H1 (cell line): ENCODE measurements at regions of chr5 and their contacts with region 1.

Region 1: GRCh38 chr5:148957591-148958202 is 105.2 kb downstream of the SH3TC2 start:
- DNase-seq: peak in 1 of 2 experiments; percentile 85
- H3K4me3 ChIP-seq: no peak overlapping the region
- H3K27ac ChIP-seq: no peak overlapping the region
- H3K4me1 ChIP-seq: peaks cover 3 to 6% (median 5%) of the 10 kb centered on the region in 4 experiments; a peak in 6 of 7 replicates
- H3K27me3 ChIP-seq: no peaks in the 10 kb centered on the region
- CTCF ChIP-seq: peak; percentile 73 to 87 (median 86)
- EP300 ChIP-seq: no peak
- POLR2A ChIP-seq: no peak
- RAD21 ChIP-seq: peak; percentile 91 to 96

Region 2: GRCh38 chr5:148831590-148832565 is 125.8 kb before region 1 on chr5:
- CTCF ChIA-PET with region 1: interaction called, 10 read pairs
- POLR2A ChIA-PET with region 1: no interaction called
- DNase-seq: no peak
- H3K4me3 ChIP-seq: no peak overlapping the region
- H3K27ac ChIP-seq: no peak overlapping the region
- H3K4me1 ChIP-seq: no peaks in the 10 kb centered on the region; a peak in 1 of 7 replicates
- H3K27me3 ChIP-seq: peaks cover 5 to 10% (median 9%) of the 10 kb centered on the region in 4 experiments
- CTCF ChIP-seq: no peak
- EP300 ChIP-seq: no peak
- POLR2A ChIP-seq: no peak
- RAD21 ChIP-seq: no peak

Region 3: DNA sequence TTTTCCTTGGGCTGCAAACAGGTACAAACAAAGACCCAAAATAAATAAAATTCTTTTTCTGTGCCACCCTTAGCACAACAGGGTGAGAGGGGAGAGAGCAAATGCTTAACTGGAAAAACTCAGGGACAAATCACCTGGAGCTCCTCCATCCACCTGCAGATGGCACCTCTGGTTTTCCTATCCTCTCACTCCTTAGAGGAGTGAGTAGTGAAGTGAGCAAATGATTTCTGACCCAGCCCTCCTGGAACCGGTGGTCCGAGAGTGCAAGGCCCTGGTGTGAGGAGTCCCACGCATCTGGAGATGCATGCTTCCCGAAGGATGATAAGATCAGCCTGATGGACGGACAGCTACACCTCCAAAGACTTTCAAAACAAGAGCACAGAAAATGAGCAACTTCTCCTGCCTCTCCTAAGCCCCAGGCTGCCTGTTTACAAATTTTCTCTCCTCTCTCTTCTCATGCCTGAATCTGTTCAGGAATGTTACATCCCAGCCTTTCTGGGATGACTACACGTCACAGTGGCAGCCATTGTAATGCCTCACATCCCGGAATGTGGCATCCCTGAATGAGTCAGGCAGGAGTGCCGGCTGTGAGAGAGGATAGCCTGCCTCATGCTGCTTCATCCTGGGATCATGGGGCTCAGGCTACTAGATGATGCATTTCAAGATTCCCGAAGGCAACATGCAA is 44.8 kb before region 1 on chr5:
- CTCF ChIA-PET with region 1: interaction called, 114 read pairs
- POLR2A ChIA-PET with region 1: interaction called, 3 read pairs
- DNase-seq: peak; percentile 53 to 68
- H3K4me3 ChIP-seq: no peak overlapping the region
- H3K27ac ChIP-seq: no peak overlapping the region; the same call in none of the 2 replicates
- H3K4me1 ChIP-seq: peaks cover 4 to 17% (median 9%) of the 10 kb centered on the region in 4 experiments
- H3K27me3 ChIP-seq: no peaks in the 10 kb centered on the region
- CTCF ChIP-seq: peak; percentile 29 to 56 (median 52)
- EP300 ChIP-seq: peak in 1 of 2 experiments; percentile 82; a peak in 1 of 3 replicates
- POLR2A ChIP-seq: no peak
- RAD21 ChIP-seq: peak; percentile 65 to 72

Region 4: GRCh38 chr5:148979104-148979723 is 21.5 kb after region 1 on chr5:
- CTCF ChIA-PET with region 1: interaction called, 92 read pairs
- POLR2A ChIA-PET with region 1: no interaction called
- DNase-seq: no peak
- H3K4me3 ChIP-seq: no peak overlapping the region
- H3K27ac ChIP-seq: no peak overlapping the region
- H3K4me1 ChIP-seq: peaks cover 0 to 13% (median 5%) of the 10 kb centered on the region in 4 experiments; a peak in 4 of 7 replicates
- H3K27me3 ChIP-seq: no peaks in the 10 kb centered on the region
- CTCF ChIP-seq: no peak
- EP300 ChIP-seq: no peak
- POLR2A ChIP-seq: no peak
- RAD21 ChIP-seq: no peak

Region 5: GRCh38 chr5:149005077-149005892 is 47.6 kb after region 1 on chr5:
- CTCF ChIA-PET with region 1: interaction called, 98 read pairs
- POLR2A ChIA-PET with region 1: no interaction called
- DNase-seq: no peak
- H3K4me3 ChIP-seq: no peak overlapping the region
- H3K27ac ChIP-seq: no peak overlapping the region
- H3K4me1 ChIP-seq: no peaks in the 10 kb centered on the region; a peak in 1 of 7 replicates
- H3K27me3 ChIP-seq: no peaks in the 10 kb centered on the region
- CTCF ChIP-seq: no peak
- EP300 ChIP-seq: no peak
- POLR2A ChIP-seq: no peak
- RAD21 ChIP-seq: no peak